Heart right ventricle (tissue), 16 donors: ENCODE measurements at regions of chr20 and their contacts with region 1.

Region 1: DNA sequence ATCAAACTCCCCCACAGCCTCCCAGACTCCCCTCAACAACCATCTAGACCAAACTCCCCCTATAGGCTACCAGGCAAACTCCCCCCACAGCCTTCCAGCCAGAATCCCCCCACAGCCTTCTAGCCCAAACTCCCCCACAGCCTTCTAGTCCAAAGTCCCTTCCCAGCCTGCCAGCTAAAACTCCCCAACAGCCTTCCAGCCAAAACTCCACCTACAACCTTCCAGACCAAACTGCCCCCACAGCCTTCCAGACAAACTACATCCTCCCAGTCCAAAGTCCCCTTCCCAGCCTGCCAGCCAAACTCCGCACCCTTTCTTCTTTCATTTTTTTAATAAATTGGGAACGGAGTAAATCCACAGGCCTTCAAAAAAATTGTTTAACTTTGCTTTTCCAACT is 37.4 kb upstream of the SYNDIG1 start:
- DNase-seq: no peak
- ATAC-seq: no peak
- H3K4me3 ChIP-seq: no peak overlapping the region
- H3K27ac ChIP-seq: no peak overlapping the region
- H3K4me1 ChIP-seq: no peaks in the 10 kb centered on the region
- H3K27me3 ChIP-seq: peaks cover 0 to 24% (median 10%) of the 10 kb centered on the region in 7 donors
- CTCF ChIP-seq: no peak

Region 2: GRCh38 chr20:22861990-22862389 is 1570.1 kb before region 1 on chr20:
- intact Hi-C with region 1: no loop called
- DNase-seq: peak; percentile 43 to 68
- ATAC-seq: peak; percentile 75 to 93 (median 84)
- H3K4me3 ChIP-seq: no peak overlapping the region
- H3K27ac ChIP-seq: peak overlapping the region in 9 of 10 donors; percentile 39 to 85 (median 71)
- H3K4me1 ChIP-seq: peaks cover 0 to 35% (median 5%) of the 10 kb centered on the region in 9 donors
- H3K27me3 ChIP-seq: peaks cover 0 to 6% (median 0%) of the 10 kb centered on the region in 7 donors
- CTCF ChIP-seq: no peak

Region 3: GRCh38 chr20:24359321-24360027 is 72.6 kb before region 1 on chr20:
- intact Hi-C with region 1: loop called in 1 of 10 experiments (anchors 10 kb)
- DNase-seq: no peak
- ATAC-seq: peak in 2 of 8 donors; percentile 23 to 35
- H3K4me3 ChIP-seq: no peak overlapping the region
- H3K27ac ChIP-seq: no peak overlapping the region
- H3K4me1 ChIP-seq: peaks cover 0 to 4% (median 0%) of the 10 kb centered on the region in 9 donors
- H3K27me3 ChIP-seq: peaks cover 0 to 13% (median 0%) of the 10 kb centered on the region in 7 donors
- CTCF ChIP-seq: no peak

Region 4: GRCh38 chr20:24507182-24507853 is 75.3 kb after region 1 on chr20:
- intact Hi-C with region 1: no loop called
- DNase-seq: no peak
- ATAC-seq: no peak
- H3K4me3 ChIP-seq: no peak overlapping the region
- H3K27ac ChIP-seq: peak overlapping the region in 2 of 10 donors; percentile 4 to 91
- H3K4me1 ChIP-seq: peaks cover 0 to 57% (median 8%) of the 10 kb centered on the region in 9 donors
- H3K27me3 ChIP-seq: no peaks in the 10 kb centered on the region
- CTCF ChIP-seq: no peak